ENCODE measurements at regions of chr18 and their contacts with region 1.

Region 1: DNA sequence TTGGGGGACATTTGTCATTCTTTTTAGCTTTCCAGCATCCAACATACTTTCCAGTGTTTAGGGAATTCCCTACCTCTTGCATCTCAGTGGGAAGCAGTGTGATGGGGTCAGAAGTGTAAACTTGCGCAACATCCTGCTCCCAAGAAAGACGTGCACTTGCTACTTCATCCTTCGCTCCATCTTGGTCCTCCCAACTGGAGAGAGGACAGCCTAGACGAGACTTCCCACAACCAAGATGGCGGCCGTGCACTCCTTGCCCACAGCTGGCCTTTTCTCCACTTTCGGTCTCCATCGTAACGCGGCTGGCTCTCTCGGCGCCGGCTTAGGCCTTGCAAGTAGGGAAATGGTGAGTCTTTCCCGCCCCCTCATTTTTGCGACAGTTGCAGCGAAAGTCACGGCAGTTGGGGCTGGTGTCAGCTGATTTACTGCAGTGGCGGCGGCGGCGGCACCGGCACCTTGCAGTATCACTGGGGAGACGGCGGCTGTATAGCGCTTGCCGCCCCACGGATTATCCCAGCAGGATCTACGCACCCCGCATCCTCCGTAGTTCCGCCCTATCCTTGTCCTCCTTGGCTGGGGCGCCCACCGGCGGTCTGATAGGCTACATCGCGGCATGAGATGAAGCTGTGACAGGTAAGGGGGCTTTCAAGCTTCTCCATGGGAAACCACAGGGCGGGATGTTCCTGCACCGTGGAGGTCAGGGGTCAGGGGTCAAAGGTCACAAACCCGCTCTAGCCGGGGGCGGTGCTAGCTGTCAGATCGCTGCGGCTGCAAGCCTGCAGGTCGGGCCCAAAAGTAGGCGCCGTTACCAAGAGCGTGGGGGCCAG is at the start of gene WDR7:
- DNase-seq: peak; percentile 89 to 99 (median 93)
- ATAC-seq: peak; percentile 88
- H3K4me3 ChIP-seq: peak within 1 kb of the TSS; percentile 87 to 90
- H3K4me3 Mint-ChIP-seq: peak within 1 kb of the TSS; percentile 93
- H3K27ac ChIP-seq: peak within 1 kb of the TSS; percentile 69 to 82
- H3K27ac Mint-ChIP-seq: peak within 1 kb of the TSS; percentile 96
- H3K4me1 ChIP-seq: peaks cover 31% of the 10 kb centered on the region
- H3K4me1 Mint-ChIP-seq: peaks cover 54% of the 10 kb centered on the region
- H3K27me3 ChIP-seq: no peaks in the 10 kb centered on the region
- H3K27me3 Mint-ChIP-seq: no peaks in the 10 kb centered on the region
- CTCF ChIP-seq: no peak
- total RNA-seq, gene WDR7: 21.0 to 22.1 TPM

Region 2: GRCh38 chr18:56638271-56639093 is 12.7 kb before region 1 on chr18 and contains the start of gene TXNL1:
- CTCF ChIA-PET with region 1: interaction called, 5 read pairs
- POLR2A ChIA-PET with region 1: interaction called, 60 read pairs
- intact Hi-C with region 1: loop called (anchors 1 kb)
- DNase-seq: peak; percentile 97 to 100 (median 99)
- ATAC-seq: peak; percentile 97
- H3K4me3 ChIP-seq: peak within 1 kb of the TSS; percentile 55 to 74
- H3K4me3 Mint-ChIP-seq: peak within 1 kb of the TSS; percentile 98
- H3K27ac ChIP-seq: peak within 1 kb of the TSS; percentile 85
- H3K27ac Mint-ChIP-seq: peak within 1 kb of the TSS; percentile 99
- H3K4me1 ChIP-seq: peaks cover 35% of the 10 kb centered on the region
- H3K4me1 Mint-ChIP-seq: peaks cover 51% of the 10 kb centered on the region
- H3K27me3 ChIP-seq: no peaks in the 10 kb centered on the region
- H3K27me3 Mint-ChIP-seq: no peaks in the 10 kb centered on the region
- CTCF ChIP-seq: no peak
- total RNA-seq, gene TXNL1: 43.3 to 44.8 TPM

Region 3: GRCh38 chr18:56691530-56691929 is 40.4 kb after region 1 on chr18:
- CTCF ChIA-PET with region 1: no interaction called
- POLR2A ChIA-PET with region 1: no interaction called
- intact Hi-C with region 1: loop called in 1 of 2 experiments (anchors 5 kb)
- DNase-seq: no peak
- ATAC-seq: no peak
- H3K4me3 ChIP-seq: no peak overlapping the region
- H3K4me3 Mint-ChIP-seq: no peak overlapping the region
- H3K27ac ChIP-seq: no peak overlapping the region
- H3K27ac Mint-ChIP-seq: no peak overlapping the region
- H3K4me1 ChIP-seq: no peaks in the 10 kb centered on the region
- H3K4me1 Mint-ChIP-seq: no peaks in the 10 kb centered on the region
- H3K27me3 ChIP-seq: no peaks in the 10 kb centered on the region
- H3K27me3 Mint-ChIP-seq: no peaks in the 10 kb centered on the region
- CTCF ChIP-seq: no peak

Region 4: GRCh38 chr18:56709463-56709862 is 58.3 kb after region 1 on chr18:
- CTCF ChIA-PET with region 1: interaction called, 3 read pairs
- POLR2A ChIA-PET with region 1: no interaction called
- intact Hi-C with region 1: loop called (anchors 1 to 2 kb)
- DNase-seq: peak in 7 of 9 experiments; percentile 2 to 77 (median 34)
- ATAC-seq: peak; percentile 100
- H3K4me3 ChIP-seq: no peak overlapping the region
- H3K4me3 Mint-ChIP-seq: no peak overlapping the region
- H3K27ac ChIP-seq: no peak overlapping the region
- H3K27ac Mint-ChIP-seq: no peak overlapping the region
- H3K4me1 ChIP-seq: no peaks in the 10 kb centered on the region
- H3K4me1 Mint-ChIP-seq: peaks cover 5% of the 10 kb centered on the region
- H3K27me3 ChIP-seq: no peaks in the 10 kb centered on the region
- H3K27me3 Mint-ChIP-seq: no peaks in the 10 kb centered on the region
- CTCF ChIP-seq: peak; percentile 58

Region 5: GRCh38 chr18:56999823-57000222 is 348.7 kb after region 1 on chr18:
- CTCF ChIA-PET with region 1: no interaction called
- POLR2A ChIA-PET with region 1: no interaction called
- intact Hi-C with region 1: loop called in 1 of 2 experiments (anchors 2 kb)
- DNase-seq: no peak
- ATAC-seq: no peak
- H3K4me3 ChIP-seq: no peak overlapping the region
- H3K4me3 Mint-ChIP-seq: no peak overlapping the region
- H3K27ac ChIP-seq: no peak overlapping the region
- H3K27ac Mint-ChIP-seq: no peak overlapping the region
- H3K4me1 ChIP-seq: peaks cover 10% of the 10 kb centered on the region
- H3K4me1 Mint-ChIP-seq: peaks cover 20% of the 10 kb centered on the region
- H3K27me3 ChIP-seq: no peaks in the 10 kb centered on the region
- H3K27me3 Mint-ChIP-seq: no peaks in the 10 kb centered on the region
- CTCF ChIP-seq: no peak

Region 6: GRCh38 chr18:57621246-57621604 is 970.1 kb after region 1 on chr18:
- CTCF ChIA-PET with region 1: no interaction called
- POLR2A ChIA-PET with region 1: interaction called, 3 read pairs
- intact Hi-C with region 1: loop called in 1 of 2 experiments (anchors 1 kb)
- DNase-seq: peak in 1 of 9 experiments; percentile 3
- ATAC-seq: peak; percentile 11
- H3K4me3 ChIP-seq: peak overlapping the region; percentile 94 to 96
- H3K4me3 Mint-ChIP-seq: peak overlapping the region; percentile 99
- H3K27ac ChIP-seq: peak overlapping the region; percentile 89 to 93
- H3K27ac Mint-ChIP-seq: peak overlapping the region; percentile 97
- H3K4me1 ChIP-seq: peaks cover 12% of the 10 kb centered on the region
- H3K4me1 Mint-ChIP-seq: peaks cover 37% of the 10 kb centered on the region
- H3K27me3 ChIP-seq: no peaks in the 10 kb centered on the region
- H3K27me3 Mint-ChIP-seq: no peaks in the 10 kb centered on the region
- CTCF ChIP-seq: no peak

Region 7: DNA sequence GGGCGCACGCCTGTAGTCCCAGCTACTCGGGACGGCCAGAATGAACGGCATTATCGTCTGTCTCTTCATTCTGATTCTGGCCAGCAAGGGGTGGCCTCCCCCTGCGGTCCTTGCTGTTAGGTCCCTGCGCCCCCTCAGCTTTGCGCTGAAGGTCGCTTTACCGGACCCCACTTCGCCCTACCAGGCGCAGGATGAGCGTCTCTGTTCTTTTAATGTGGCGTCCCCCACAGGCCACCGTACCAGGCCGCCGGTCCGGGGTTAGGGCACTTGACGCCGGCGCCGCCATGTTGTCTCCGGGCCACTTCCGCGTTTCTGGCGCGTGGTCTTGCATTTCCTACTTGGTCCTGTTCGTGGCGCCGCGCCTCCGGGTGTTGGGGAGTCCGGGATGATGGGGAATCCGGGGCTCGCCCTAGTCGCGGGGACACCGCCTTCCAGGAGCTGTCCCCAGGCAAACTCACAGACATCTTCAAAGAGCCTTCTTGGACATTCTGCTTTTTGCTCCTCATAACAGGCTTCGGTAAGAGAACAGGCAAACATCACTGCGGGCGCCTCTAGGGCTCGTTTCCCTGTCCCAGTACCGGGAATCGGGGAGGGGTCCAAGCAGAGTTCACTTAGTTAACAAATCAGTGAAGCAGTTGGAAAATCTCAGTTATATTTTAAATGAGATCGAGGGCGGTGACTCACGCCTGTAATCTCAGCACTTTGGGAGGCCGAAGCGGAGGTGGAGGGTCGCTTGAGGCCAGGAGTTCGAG is 979.0 kb after region 1 on chr18:
- CTCF ChIA-PET with region 1: no interaction called
- POLR2A ChIA-PET with region 1: interaction called, 4 read pairs
- intact Hi-C with region 1: loop called in 1 of 2 experiments (anchors 1 kb)
- DNase-seq: peak; percentile 86 to 96 (median 95)
- ATAC-seq: peak; percentile 99
- H3K4me3 ChIP-seq: peak overlapping the region; percentile 71 to 90
- H3K4me3 Mint-ChIP-seq: peak overlapping the region; percentile 97
- H3K27ac ChIP-seq: peak overlapping the region; percentile 46 to 59
- H3K27ac Mint-ChIP-seq: peak overlapping the region; percentile 92
- H3K4me1 ChIP-seq: peaks cover 15% of the 10 kb centered on the region
- H3K4me1 Mint-ChIP-seq: peaks cover 16% of the 10 kb centered on the region
- H3K27me3 ChIP-seq: no peaks in the 10 kb centered on the region
- H3K27me3 Mint-ChIP-seq: no peaks in the 10 kb centered on the region
- CTCF ChIP-seq: peak; percentile 70

Measured in CD8-positive, alpha-beta T cell (primary cell).